Activated naive CD4-positive, alpha-beta T cell treated with anti-CD3 and anti-CD28 coated beads for 36 hours (primary cell): ENCODE measurements at regions of chr14 and their contacts with region 1.

Region 1: DNA sequence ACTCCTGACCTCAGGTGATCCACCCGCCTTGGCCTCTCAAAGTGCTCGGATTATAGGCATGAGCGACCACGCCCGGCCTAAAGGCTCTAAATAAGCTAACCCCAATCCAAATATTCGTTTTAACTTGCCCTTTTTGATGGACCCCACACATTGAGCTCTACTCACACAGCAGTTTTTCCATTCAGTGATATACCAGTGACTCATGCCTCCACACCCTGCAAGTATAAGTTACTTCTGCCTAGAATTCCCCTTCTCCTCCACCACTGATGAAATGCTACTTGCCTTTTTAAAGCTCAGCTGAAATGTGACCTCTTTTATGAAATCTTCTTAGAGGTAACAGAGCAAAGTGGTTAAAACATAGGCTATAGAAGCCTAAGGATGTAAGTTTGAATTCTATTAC is 68.8 kb downstream of the EXOC5 start:
- DNase-seq: no peak
- H3K4me3 Mint-ChIP-seq: no peak overlapping the region
- H3K27ac Mint-ChIP-seq: no peak overlapping the region
- H3K4me1 Mint-ChIP-seq: peaks cover 3% of the 10 kb centered on the region
- H3K27me3 Mint-ChIP-seq: peaks cover 6% of the 10 kb centered on the region

Region 2: DNA sequence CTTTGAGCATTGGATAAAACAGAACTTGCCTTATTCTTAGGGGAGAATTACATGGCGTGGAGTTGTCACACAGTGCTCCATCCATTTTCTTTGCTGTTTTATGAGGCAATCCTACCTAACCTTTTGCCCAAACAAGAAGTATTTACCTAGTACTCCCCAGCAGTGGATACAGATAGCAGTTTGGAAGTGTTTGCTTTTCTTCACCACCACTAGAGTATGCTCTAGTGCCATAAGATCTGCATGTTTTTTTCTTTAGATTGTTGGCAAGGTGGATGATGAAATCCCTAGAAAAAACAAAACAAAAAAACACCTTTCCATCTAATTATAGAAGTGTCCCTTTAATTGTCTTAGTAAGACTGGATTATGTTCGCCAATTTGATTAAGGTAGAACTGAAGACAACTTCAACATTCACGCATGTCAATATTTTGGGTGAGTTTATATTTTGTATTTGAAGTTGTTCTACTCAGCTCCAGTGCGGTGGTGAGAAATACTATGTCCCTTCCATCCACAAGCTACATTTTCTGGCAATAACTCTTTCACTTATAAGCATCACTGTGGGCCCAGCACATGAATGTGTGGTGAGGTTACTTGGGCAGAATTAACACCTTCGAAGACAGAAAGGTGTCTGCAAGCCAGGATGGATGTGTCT is 643.9 kb before region 1 on chr14:
- CTCF ChIA-PET with region 1: no interaction called
- intact Hi-C with region 1: loop called (anchors 5 kb)
- DNase-seq: no peak
- H3K4me3 Mint-ChIP-seq: no peak overlapping the region
- H3K27ac Mint-ChIP-seq: no peak overlapping the region
- H3K4me1 Mint-ChIP-seq: no peaks in the 10 kb centered on the region
- H3K27me3 Mint-ChIP-seq: peaks cover 8% of the 10 kb centered on the region

Region 3: GRCh38 chr14:57244106-57244505 is 44.2 kb after region 1 on chr14:
- CTCF ChIA-PET with region 1: no interaction called
- intact Hi-C with region 1: no loop called
- DNase-seq: no peak
- H3K4me3 Mint-ChIP-seq: no peak overlapping the region
- H3K27ac Mint-ChIP-seq: no peak overlapping the region
- H3K4me1 Mint-ChIP-seq: no peaks in the 10 kb centered on the region
- H3K27me3 Mint-ChIP-seq: no peaks in the 10 kb centered on the region